Left cardiac atrium (tissue), 4 donors: ENCODE measurements at regions of chr10 and their contacts with region 1.

Region 1: GRCh38 chr10:45249978-45250693 is 65.3 kb downstream of the OR13A1 start:
- DNase-seq: no peak
- ATAC-seq: peak; percentile 57 to 73

Region 2: GRCh38 chr10:45379951-45380461 is 129.9 kb after region 1 on chr10:
- intact Hi-C with region 1: no loop called
- DNase-seq: peak; percentile 37
- ATAC-seq: peak; percentile 73 to 83

Region 3: DNA sequence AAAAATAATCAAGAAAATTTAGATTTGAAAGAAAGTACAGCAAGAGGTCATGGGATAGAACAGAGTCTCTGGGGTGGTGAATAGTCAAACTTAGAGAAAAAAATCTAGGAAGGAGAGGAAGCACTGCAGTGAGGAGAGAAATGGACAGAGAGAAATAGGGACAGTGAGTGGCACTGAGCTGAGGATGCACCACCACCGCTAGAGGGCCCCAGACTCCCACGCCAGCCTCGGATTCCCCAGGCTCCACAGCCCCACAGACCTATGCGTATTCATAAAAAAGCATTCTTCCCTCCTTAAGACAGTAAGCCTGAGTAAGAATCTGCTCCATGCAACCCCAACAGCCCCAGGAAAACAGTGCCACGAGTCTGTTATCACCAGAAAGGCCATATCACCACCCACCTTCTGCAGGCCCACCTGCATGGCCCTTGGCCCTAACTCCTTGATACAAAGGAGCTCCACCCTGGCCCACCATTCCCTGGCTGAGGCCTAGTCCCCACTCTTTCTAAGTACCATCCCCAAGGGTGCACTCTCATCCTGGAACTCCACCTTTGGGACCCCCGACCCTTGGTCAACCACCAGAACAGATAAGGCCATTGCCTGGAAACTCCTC is 214.9 kb after region 1 on chr10:
- intact Hi-C with region 1: loop called in 1 of 2 experiments (anchors 10 kb)
- DNase-seq: peak; percentile 80
- ATAC-seq: peak; percentile 93 to 95